Stomach (tissue), 19 donors: ENCODE measurements at regions of chr17 and their contacts with region 1.

Region 1: GRCh38 chr17:43477832-43478634 is 5.7 kb upstream of the DHX8 start:
- DNase-seq: peak in 1 of 2 donors; percentile 26
- H3K4me3 ChIP-seq: no peak overlapping the region
- H3K27ac ChIP-seq: no peak overlapping the region
- H3K4me1 ChIP-seq: peaks cover 1 to 2% (median 2%) of the 10 kb centered on the region in 4 donors
- H3K27me3 ChIP-seq: no peaks in the 10 kb centered on the region
- CTCF ChIP-seq: no peak
- EP300 ChIP-seq: no peak
- POLR2A ChIP-seq: no peak

Region 2: DNA sequence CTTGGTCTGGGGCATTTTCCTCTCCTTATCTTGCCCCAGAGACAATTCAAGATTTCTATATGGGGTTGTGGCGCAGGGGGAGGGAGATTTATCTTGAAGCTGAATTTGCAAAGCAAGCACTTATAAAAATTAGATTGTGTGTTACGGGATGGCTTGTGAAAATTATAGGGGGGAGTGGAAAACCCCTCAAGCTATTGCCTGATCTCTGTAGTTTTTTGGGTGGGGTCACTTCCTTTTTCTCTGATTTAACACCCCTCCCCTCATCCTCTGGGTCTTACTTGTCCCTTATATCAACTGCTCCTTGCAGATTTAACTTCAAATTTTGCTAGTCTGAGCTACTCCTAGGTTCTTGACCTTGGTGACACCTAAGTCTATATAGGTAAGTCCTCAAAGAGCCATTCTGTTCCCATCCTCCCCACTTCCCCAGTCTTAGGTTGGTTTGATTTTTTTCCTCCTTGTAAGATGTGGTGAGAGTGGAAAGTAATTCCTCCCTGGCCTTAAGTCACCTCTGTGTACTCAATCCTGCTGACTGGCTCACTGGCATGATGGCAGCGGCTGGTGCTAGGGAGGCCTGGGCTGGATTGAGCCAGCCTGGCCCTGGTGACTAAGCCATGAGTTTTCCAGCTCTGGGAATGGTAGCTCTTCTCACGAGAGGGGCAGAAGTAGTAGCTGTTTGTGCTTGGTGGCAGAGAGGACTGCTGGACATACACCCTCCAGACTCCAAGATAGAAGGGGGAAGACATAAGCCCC is 76.9 kb before region 1 on chr17:
- intact Hi-C with region 1: loop called (anchors 5 kb)
- DNase-seq: peak; percentile 51 to 70
- H3K4me3 ChIP-seq: peak overlapping the region; percentile 72 to 90 (median 82)
- H3K27ac ChIP-seq: peak overlapping the region in 3 of 5 donors; percentile 57 to 93 (median 76)
- H3K4me1 ChIP-seq: peaks cover 19 to 47% (median 39%) of the 10 kb centered on the region in 4 donors
- H3K27me3 ChIP-seq: no peaks in the 10 kb centered on the region
- CTCF ChIP-seq: no peak
- EP300 ChIP-seq: no peak
- POLR2A ChIP-seq: no peak

Region 3: DNA sequence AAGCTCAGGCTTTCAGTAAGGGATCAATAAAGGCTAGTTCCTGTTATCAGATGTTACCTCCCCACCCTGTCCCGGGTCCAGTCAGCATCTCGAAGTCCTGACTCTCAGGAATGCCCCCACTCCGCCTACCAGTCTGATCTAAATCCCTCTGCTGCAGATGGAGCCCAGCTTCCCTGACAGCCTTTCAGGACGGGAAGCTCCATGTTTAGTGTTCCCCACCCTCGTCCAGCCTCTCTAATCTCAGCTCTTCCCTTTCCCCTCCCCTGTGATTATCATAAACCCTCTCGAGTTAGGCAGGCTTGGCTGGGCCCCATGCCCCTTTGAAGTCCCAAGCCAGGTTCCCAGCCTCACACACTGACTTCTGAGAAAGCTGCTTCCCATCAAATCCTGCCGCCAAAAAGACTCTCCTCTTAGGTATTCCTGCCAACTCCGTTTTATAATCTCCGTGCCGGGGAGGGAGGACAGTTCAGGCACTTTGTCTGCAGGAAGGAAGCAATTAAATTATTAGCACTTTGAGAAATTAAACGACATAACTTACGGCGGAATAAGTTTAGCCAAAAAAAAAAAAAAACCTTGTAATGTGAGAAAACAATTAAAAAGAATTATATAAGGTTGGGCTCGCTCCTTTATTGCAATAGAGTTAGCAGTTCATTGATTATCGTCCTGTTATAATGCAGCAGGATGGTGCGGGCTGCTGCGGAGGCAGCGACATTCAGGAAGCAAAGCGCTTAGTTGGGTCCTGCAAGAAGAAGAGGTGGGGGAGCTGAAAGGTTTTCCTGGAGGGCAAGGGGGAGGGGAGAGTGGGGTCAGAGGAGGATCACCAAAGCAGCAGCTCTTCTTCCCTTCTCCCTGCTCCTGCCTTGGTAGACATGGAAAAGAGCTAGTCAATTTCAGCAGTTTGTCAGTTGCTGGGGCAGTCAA is 84.9 kb after region 1 on chr17:
- intact Hi-C with region 1: no loop called
- DNase-seq: peak in 1 of 2 donors; percentile 59
- H3K4me3 ChIP-seq: no peak overlapping the region
- H3K27ac ChIP-seq: no peak overlapping the region
- H3K4me1 ChIP-seq: peaks cover 0 to 9% (median 4%) of the 10 kb centered on the region in 4 donors
- H3K27me3 ChIP-seq: peaks cover 0 to 40% (median 0%) of the 10 kb centered on the region in 3 donors
- CTCF ChIP-seq: no peak
- EP300 ChIP-seq: no peak
- POLR2A ChIP-seq: no peak